ENCODE measurements at regions of chr16 and their contacts with region 1.

Region 1: GRCh38 chr16:67226804-67227557 is at the start of gene TMEM208:
- DNase-seq: peak; percentile 92
- H3K27ac ChIP-seq: peak within 1 kb of the TSS; percentile 74
- CTCF ChIP-seq: 0 out of 2 replicates have a peak, but pooled peaks have one; percentile 9

Region 2: DNA sequence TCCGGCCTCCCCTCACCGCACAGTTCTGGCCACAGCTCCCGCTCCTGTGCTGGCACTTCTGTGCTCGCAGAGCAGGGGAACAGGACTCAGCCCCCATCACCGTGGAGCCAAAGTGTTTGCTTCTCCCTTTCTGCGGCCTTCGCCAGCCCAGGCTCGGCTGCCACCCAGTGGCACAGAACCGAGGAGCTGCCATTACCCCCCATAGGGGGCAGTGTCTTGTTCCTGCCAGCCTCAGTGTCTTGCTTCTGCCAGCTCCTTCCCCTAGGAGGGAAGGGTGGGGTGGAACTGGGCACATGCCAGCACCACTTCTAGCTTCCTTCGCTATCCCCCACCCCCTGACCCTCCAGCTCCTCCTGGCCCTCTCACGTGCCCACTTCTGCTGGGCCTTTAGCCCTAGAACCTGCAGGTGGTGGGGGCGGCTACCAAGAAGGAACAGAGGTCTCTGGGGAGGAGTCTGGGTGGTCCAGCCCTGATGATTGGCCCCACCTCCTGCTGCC is 28.7 kb before region 1 on chr16:
- CTCF ChIA-PET with region 1: interaction called, 14 read pairs
- POLR2A ChIA-PET with region 1: no interaction called
- DNase-seq: peak; percentile 81
- H3K27ac ChIP-seq: peak overlapping the region; percentile 92
- CTCF ChIP-seq: peak; percentile 61

Region 3: GRCh38 chr16:67246934-67247697 is 20.1 kb after region 1 on chr16 and contains the start of gene FHOD1:
- CTCF ChIA-PET with region 1: interaction called, 3 read pairs
- POLR2A ChIA-PET with region 1: interaction called, 11 read pairs
- DNase-seq: peak; percentile 94
- H3K27ac ChIP-seq: peak within 1 kb of the TSS; percentile 92
- CTCF ChIP-seq: no peak

Region 4: GRCh38 chr16:67284699-67285646 is 58.0 kb after region 1 on chr16:
- CTCF ChIA-PET with region 1: no interaction called
- POLR2A ChIA-PET with region 1: no interaction called
- DNase-seq: no peak
- H3K27ac ChIP-seq: peak overlapping the region; percentile 65
- CTCF ChIP-seq: peak; percentile 33; the same call in 1 of the 2 replicates

Measured in RWPE1 (cell line).